Tibial artery (tissue), 4 donors: ENCODE measurements at regions of chr1 and their contacts with region 1.

Region 1: GRCh38 chr1:77779529-77780281 is at the start of gene MIGA1:
- DNase-seq: peak; percentile 91 to 92
- H3K4me3 ChIP-seq: peak within 1 kb of the TSS; percentile 76 to 98
- H3K27ac ChIP-seq: peak within 1 kb of the TSS; percentile 79 to 85
- H3K4me1 ChIP-seq: peaks cover 0 to 27% (median 9%) of the 10 kb centered on the region in 4 donors
- H3K27me3 ChIP-seq: no peaks in the 10 kb centered on the region
- CTCF ChIP-seq: no peak

Region 2: DNA sequence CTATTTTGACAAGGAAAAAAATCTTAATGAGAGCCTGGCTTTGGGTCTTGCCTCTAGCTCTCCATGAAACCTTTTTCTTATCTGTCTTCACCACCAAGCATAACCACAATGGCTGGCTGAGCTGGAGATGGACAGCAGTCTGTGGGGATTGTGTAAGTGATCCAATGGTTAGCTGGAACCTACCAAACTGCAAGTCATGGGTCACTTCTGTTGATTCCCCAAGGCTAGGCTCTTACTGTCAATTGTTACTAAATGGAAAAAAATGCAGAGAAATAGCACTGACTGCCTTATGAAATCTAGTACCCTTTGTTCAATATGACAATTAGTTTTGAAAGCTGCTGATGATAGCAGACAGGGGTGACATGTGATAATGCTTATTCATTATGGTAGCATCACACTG is 1346.2 kb before region 1 on chr1:
- intact Hi-C with region 1: loop called (anchors 5 kb)
- DNase-seq: no peak
- H3K4me3 ChIP-seq: no peak overlapping the region
- H3K27ac ChIP-seq: no peak overlapping the region
- H3K4me1 ChIP-seq: peaks cover 0 to 38% (median 0%) of the 10 kb centered on the region in 4 donors
- H3K27me3 ChIP-seq: no peaks in the 10 kb centered on the region
- CTCF ChIP-seq: no peak